Heart right ventricle (tissue), 16 donors: ENCODE measurements at regions of chr20 and their contacts with region 1.

Region 1: DNA sequence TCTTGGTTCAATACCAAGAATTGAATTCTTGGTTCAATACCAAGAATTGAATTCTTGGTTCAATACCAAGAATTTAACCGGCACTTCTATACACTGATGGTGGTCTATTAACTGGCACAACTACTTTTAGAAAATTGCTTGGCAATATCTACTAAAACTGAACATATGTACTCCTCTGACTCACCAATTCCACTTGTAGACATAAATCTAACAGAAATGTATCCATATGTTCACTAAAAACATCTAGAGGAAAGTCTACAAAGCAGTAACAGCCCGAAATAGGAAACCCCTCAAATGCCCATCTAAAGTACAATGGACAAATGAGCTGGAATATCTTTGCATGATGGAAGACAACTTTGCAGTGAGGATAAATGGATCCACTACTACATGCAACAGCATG is 71.9 kb downstream of the KIF16B start:
- DNase-seq: no peak
- ATAC-seq: no peak
- H3K4me3 ChIP-seq: no peak overlapping the region
- H3K27ac ChIP-seq: no peak overlapping the region
- H3K4me1 ChIP-seq: no peaks in the 10 kb centered on the region
- H3K27me3 ChIP-seq: no peaks in the 10 kb centered on the region
- CTCF ChIP-seq: no peak

Region 2: DNA sequence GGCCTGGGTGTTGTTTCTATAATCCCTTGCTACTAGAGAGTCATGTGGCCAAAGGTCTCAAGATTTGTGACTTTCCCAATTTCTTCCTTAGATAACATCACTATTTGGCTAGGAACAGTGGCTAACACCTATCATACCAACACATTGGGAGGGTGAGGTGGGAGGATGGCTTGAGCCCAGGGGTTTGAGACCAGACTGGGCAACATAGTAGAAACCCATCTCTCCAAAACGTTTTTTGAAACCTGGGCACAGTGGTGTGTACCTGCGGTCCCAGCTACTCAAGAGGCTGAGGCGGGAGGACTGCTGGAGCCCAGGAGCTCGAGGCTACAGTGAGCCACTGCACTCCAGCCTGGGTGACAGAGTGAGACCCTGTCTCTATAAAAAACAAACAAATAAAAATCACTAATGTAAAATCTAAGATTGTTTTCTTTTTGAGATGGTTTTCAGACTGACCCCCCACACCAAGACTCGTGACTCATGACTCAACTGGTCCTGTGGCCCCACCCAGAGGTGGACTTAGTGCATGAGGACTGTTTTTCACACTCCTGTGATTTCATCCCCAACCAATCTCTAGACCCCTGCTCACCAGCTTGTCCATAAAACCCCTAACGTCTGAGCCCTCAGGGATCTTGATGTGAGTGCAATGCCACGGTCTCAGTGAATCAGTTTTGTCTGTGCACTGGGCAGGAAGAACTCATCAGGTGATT is 120.3 kb after region 1 on chr20:
- intact Hi-C with region 1: loop called in 1 of 10 experiments (anchors 5 kb)
- DNase-seq: no peak
- ATAC-seq: no peak
- H3K4me3 ChIP-seq: no peak overlapping the region
- H3K27ac ChIP-seq: no peak overlapping the region
- H3K4me1 ChIP-seq: no peaks in the 10 kb centered on the region
- H3K27me3 ChIP-seq: no peaks in the 10 kb centered on the region
- CTCF ChIP-seq: no peak

Region 3: DNA sequence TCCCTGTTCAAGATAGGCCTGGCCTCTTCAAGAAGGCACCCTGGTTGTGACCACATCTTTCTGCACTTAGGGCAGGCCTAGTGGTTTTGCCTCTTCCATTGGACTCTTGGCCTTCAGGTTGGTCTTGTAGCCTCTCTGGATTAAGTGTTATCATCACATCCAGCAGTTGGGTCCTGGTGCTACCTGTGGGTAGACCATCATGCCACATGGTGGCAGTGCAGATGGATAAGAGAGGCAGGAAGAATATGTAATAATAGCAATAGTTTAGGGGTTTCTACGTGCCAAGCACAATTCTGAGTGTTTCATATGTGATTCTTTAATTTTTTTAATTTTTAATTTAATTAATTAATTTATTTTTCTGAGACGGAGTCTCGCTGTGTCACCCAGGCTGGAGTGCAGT is 200.0 kb after region 1 on chr20:
- intact Hi-C with region 1: no loop called
- DNase-seq: no peak
- ATAC-seq: no peak
- H3K4me3 ChIP-seq: no peak overlapping the region
- H3K27ac ChIP-seq: no peak overlapping the region
- H3K4me1 ChIP-seq: no peaks in the 10 kb centered on the region
- H3K27me3 ChIP-seq: peaks cover 0 to 10% (median 0%) of the 10 kb centered on the region in 7 donors
- CTCF ChIP-seq: peak in 6 of 9 donors; percentile 23 to 40 (median 30)